ENCODE measurements at regions of chr10 and their contacts with region 1.

Region 1: GRCh38 chr10:32298054-32298812 is 48.7 kb downstream of the EPC1 start:
- DNase-seq: no peak
- ATAC-seq: no peak
- H3K4me3 ChIP-seq: no peak overlapping the region
- H3K4me3 Mint-ChIP-seq: peak overlapping the region in 7 of 10 donors; percentile 25 to 69 (median 48)
- H3K27ac ChIP-seq: no peak overlapping the region
- H3K27ac Mint-ChIP-seq: peak overlapping the region in 7 of 9 donors; percentile 34 to 91 (median 73)
- H3K4me1 ChIP-seq: peaks cover 0 to 32% of the 10 kb centered on the region in 2 donors
- H3K4me1 Mint-ChIP-seq: peaks cover 38 to 91% (median 75%) of the 10 kb centered on the region in 7 donors
- H3K27me3 ChIP-seq: no peaks in the 10 kb centered on the region
- H3K27me3 Mint-ChIP-seq: no peaks in the 10 kb centered on the region

Region 2: DNA sequence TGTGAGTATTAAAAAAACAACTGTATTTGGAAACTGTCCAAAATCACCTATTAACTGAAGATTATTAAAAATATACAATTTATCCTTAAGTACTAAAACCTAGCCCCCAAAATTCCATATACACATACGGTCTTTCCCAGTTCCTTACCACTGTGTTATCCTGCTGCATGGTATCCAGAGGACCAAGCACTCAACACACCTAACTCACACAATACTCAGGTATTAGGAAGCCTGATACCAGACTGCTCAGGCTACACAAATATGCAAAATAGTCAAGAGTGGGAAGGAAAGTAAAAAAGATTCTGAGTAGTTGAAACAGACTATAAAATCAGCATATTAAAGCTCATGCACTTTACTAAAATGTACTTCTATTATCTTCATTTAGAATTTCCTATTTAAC is 18.4 kb before region 1 on chr10:
- CTCF ChIA-PET with region 1: interaction called, 6 read pairs
- POLR2A ChIA-PET with region 1: interaction called, 4 read pairs
- intact Hi-C with region 1: loop called in 1 of 2 experiments (anchors 2 kb)
- DNase-seq: no peak
- ATAC-seq: no peak
- H3K4me3 ChIP-seq: no peak overlapping the region
- H3K4me3 Mint-ChIP-seq: no peak overlapping the region
- H3K27ac ChIP-seq: no peak overlapping the region
- H3K27ac Mint-ChIP-seq: peak overlapping the region in 5 of 9 donors; percentile 18 to 73 (median 33)
- H3K4me1 ChIP-seq: no peaks in the 10 kb centered on the region
- H3K4me1 Mint-ChIP-seq: peaks cover 5 to 26% (median 8%) of the 10 kb centered on the region in 7 donors
- H3K27me3 ChIP-seq: no peaks in the 10 kb centered on the region
- H3K27me3 Mint-ChIP-seq: no peaks in the 10 kb centered on the region

Region 3: GRCh38 chr10:32326119-32326518 is 27.9 kb after region 1 on chr10:
- CTCF ChIA-PET with region 1: no interaction called
- POLR2A ChIA-PET with region 1: no interaction called
- intact Hi-C with region 1: loop called (anchors 5 kb)
- DNase-seq: no peak
- ATAC-seq: no peak
- H3K4me3 ChIP-seq: peak overlapping the region; percentile 3
- H3K4me3 Mint-ChIP-seq: peak overlapping the region in 8 of 10 donors; percentile 40 to 74 (median 64)
- H3K27ac ChIP-seq: no peak overlapping the region
- H3K27ac Mint-ChIP-seq: peak overlapping the region in 7 of 9 donors; percentile 12 to 75 (median 51)
- H3K4me1 ChIP-seq: peaks cover 51 to 59% of the 10 kb centered on the region in 2 donors
- H3K4me1 Mint-ChIP-seq: peaks cover 51 to 97% (median 90%) of the 10 kb centered on the region in 7 donors
- H3K27me3 ChIP-seq: no peaks in the 10 kb centered on the region
- H3K27me3 Mint-ChIP-seq: no peaks in the 10 kb centered on the region

Region 4: DNA sequence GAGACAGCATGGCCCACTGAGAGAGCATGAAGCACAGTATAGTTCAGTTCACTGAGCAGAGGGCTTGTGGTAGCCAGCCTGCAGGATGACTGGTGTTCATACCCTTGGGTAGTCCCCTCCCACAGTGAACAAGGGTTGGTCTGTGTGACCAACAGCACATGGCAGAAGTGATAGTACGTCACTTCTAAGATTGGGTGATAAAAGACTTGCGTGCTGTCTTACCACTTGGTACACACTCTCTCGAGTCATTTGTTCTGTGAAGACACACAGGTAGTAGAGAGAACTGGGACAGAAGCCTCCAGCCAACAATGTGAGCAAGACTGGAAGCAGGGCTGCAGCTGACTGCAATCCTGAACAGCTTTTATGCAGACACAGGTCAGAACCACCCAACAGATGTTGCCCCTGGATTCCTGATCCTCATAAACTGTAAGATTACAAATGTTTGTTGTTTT is 34.1 kb after region 1 on chr10:
- CTCF ChIA-PET with region 1: no interaction called
- POLR2A ChIA-PET with region 1: no interaction called
- intact Hi-C with region 1: loop called (anchors 5 kb)
- DNase-seq: peak; percentile 16 to 92 (median 71)
- ATAC-seq: peak; percentile 96
- H3K4me3 ChIP-seq: no peak overlapping the region
- H3K4me3 Mint-ChIP-seq: peak overlapping the region; percentile 52 to 84 (median 70)
- H3K27ac ChIP-seq: peak overlapping the region; percentile 56
- H3K27ac Mint-ChIP-seq: peak overlapping the region; percentile 41 to 95 (median 85)
- H3K4me1 ChIP-seq: peaks cover 80 to 84% of the 10 kb centered on the region in 2 donors
- H3K4me1 Mint-ChIP-seq: peaks cover 78 to 98% (median 94%) of the 10 kb centered on the region in 7 donors
- H3K27me3 ChIP-seq: no peaks in the 10 kb centered on the region
- H3K27me3 Mint-ChIP-seq: no peaks in the 10 kb centered on the region